Right ventricle myocardium inferior (tissue), 1 donor: ENCODE measurements at regions of chr13 and their contacts with region 1.

Region 1: DNA sequence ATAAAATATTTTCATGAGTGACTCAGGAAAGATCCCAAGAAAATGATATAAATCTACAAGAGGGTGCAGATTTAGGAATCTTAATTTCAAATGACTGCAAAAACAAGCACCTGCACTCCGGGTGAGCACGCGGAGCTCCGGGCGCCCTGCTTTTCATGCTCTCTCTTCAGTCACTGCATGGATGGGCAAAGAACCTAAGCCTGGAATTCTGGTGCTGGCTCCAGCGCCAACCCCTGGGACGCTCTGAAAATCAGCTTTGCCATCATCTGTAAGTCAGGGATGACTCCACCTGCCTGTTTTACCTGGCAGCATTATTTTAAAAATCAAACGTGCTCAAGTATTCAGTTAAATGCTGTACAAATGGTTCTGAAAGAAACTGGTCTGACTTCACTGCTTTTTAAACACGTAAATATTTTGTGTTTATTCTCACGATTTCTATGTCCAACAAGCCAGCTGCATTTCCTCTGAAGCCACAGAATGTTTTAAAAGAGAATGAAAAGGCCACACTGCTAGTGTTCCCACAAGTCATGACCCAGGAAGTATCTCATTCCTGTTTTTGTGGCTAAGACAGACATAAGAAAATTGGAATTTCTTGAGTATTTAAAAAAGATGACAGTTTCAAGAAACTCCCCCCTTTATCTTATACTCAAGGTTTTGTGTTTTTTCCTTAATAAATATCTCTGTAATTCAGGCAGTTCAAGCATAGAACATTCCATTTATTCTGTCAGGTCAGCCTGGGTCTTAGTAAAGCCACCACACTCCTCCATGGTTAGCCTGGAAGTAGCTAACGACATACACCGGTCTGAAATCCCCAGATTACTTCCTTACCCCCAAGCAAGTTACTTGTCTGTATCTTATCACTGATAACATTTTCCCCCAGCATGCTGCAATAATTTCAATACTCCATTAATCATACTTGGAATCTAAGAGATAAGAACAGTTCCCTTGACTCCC is 81.1 kb downstream of the COL4A1 start:
- DNase-seq: no peak
- ATAC-seq: no peak

Region 2: GRCh38 chr13:110265682-110266430 is 40.0 kb after region 1 on chr13:
- intact Hi-C with region 1: loop called (anchors 5 kb)
- DNase-seq: peak; percentile 80
- ATAC-seq: no peak

Region 3: GRCh38 chr13:110412132-110412914 is 186.4 kb after region 1 on chr13:
- intact Hi-C with region 1: loop called (anchors 2 kb)
- DNase-seq: peak; percentile 91
- ATAC-seq: peak; percentile 85